ENCODE measurements at regions of chr6 and their contacts with region 1.

Region 1: DNA sequence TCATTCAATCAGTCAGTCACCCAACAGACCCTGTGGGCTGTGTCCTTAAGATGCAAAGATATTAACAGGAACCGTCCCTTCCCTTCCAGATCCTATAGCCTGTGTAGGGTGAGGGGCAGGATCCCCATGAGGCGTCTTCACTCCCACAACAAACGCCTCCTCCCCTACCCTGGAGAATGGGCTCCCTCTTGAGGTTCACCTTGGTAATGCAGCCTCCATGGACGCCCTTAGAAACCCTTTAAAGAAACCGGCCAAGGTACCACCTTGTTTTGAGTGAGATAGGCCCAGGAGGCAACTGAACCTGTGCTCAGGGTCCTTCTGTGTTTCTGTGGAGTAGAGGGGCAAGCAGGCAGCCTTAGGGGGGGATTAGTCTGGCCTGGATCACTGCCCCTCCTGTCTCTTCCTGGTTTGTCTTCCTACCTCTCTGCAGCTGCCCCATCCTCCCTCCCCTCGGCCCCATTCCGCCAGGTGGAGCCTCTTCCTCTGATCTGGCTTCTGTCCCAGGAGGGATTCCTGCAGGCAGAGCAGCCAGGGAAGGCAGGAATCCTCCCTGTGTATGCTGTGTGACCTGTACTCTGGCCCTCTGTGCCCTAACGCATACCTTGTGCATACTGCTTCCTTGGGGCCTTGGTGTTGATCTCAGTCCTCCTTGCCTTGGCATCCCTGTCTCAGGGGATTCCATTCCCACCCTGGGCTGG is 6.6 kb upstream of the GUCA1A start:
- DNase-seq: peak; percentile 79
- ATAC-seq: peak; percentile 76
- H3K4me3 ChIP-seq: no peak overlapping the region
- H3K4me3 Mint-ChIP-seq: no peak overlapping the region
- H3K27ac ChIP-seq: no peak overlapping the region
- H3K27ac Mint-ChIP-seq: no peak overlapping the region
- H3K4me1 ChIP-seq: no peaks in the 10 kb centered on the region
- H3K4me1 Mint-ChIP-seq: no peaks in the 10 kb centered on the region
- H3K27me3 ChIP-seq: no peaks in the 10 kb centered on the region
- H3K27me3 Mint-ChIP-seq: peaks cover 7% of the 10 kb centered on the region
- CTCF ChIP-seq: peak; percentile 89

Region 2: GRCh38 chr6:42075159-42075838 is 91.3 kb before region 1 on chr6:
- CTCF ChIA-PET with region 1: interaction called, 4 read pairs
- POLR2A ChIA-PET with region 1: no interaction called
- intact Hi-C with region 1: loop called (anchors 1 kb)
- DNase-seq: peak; percentile 56
- ATAC-seq: no peak
- H3K4me3 ChIP-seq: no peak overlapping the region
- H3K4me3 Mint-ChIP-seq: no peak overlapping the region
- H3K27ac ChIP-seq: no peak overlapping the region
- H3K27ac Mint-ChIP-seq: no peak overlapping the region
- H3K4me1 ChIP-seq: no peaks in the 10 kb centered on the region
- H3K4me1 Mint-ChIP-seq: no peaks in the 10 kb centered on the region
- H3K27me3 ChIP-seq: no peaks in the 10 kb centered on the region
- H3K27me3 Mint-ChIP-seq: no peaks in the 10 kb centered on the region
- CTCF ChIP-seq: peak; percentile 70

Measured in B cell (primary cell).